CD8-positive, alpha-beta T cell (primary cell): ENCODE measurements at regions of chr3 and their contacts with region 1.

Region 1: DNA sequence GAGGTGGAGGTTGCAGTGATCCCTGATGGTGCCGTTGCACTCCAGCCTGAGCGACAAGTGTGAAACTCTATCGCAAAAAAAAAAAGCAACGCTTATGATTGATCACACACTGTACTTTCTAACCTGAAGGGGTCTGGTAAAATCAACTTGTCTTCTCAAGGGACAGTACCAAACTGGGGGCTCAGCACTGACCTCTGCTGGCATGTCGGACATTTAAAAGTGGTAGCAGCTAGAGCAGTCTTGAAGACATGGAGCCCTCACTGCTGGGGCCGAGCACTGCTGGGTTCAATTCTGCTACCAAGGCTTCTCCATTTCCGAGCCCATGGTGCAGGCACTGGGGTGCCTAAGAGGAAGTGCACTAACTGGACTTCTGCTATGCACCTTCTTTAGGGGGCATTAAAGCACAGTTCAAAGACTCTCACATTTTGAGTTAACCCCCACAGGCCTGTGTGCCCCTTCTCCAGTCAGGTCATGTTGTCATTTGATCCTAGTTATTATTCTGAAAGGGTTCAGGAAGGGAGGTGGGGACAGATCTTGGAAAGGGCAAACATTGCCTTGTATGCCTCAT is 26.4 kb upstream of the LAMP3 start:
- DNase-seq: peak in 4 of 9 experiments; percentile 24 to 50 (median 38)
- ATAC-seq: no peak
- H3K4me3 ChIP-seq: no peak overlapping the region
- H3K4me3 Mint-ChIP-seq: no peak overlapping the region
- H3K27ac ChIP-seq: no peak overlapping the region
- H3K27ac Mint-ChIP-seq: no peak overlapping the region
- H3K4me1 ChIP-seq: no peaks in the 10 kb centered on the region
- H3K4me1 Mint-ChIP-seq: no peaks in the 10 kb centered on the region
- H3K27me3 ChIP-seq: no peaks in the 10 kb centered on the region
- H3K27me3 Mint-ChIP-seq: no peaks in the 10 kb centered on the region
- CTCF ChIP-seq: no peak

Region 2: DNA sequence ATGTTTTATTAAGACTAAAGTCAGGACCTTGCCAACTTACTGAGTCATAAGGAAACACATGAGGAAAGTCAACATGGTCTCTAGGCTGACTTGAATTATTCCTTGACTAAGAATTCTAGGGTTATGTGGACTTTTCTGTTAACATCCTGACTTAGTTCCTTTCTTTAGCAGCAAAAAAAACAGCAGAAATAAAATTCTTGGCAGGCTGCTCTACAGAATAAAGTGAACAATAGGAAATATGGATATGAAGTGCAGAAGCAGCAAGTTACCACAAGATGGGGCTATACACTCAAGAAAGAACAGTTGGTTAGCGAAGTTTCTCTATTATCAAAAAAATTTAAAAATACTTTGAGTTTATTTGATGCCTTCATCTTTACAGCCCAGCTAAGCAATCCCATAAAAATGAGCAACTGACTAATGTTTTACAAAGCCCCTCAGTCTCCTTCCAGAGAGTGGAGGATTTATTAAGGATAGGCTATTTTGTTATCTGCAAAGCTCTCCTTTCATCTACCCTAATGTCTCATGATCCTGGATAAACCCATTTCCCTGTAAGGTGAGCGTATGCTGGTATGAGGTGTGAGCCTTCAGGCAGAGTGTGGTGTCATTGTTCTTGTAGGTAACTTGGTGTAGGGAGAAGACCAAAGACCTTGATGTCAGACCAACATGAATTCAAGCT is 66.6 kb before region 1 on chr3:
- CTCF ChIA-PET with region 1: interaction called, 30 read pairs
- POLR2A ChIA-PET with region 1: no interaction called
- intact Hi-C with region 1: loop called in 1 of 2 experiments (anchors 2 kb)
- DNase-seq: peak in 2 of 9 experiments; percentile 58 to 69
- ATAC-seq: peak; percentile 65
- H3K4me3 ChIP-seq: no peak overlapping the region
- H3K4me3 Mint-ChIP-seq: no peak overlapping the region
- H3K27ac ChIP-seq: no peak overlapping the region
- H3K27ac Mint-ChIP-seq: no peak overlapping the region
- H3K4me1 ChIP-seq: no peaks in the 10 kb centered on the region
- H3K4me1 Mint-ChIP-seq: no peaks in the 10 kb centered on the region
- H3K27me3 ChIP-seq: no peaks in the 10 kb centered on the region
- H3K27me3 Mint-ChIP-seq: peaks cover 6% of the 10 kb centered on the region
- CTCF ChIP-seq: peak; percentile 93

Region 3: GRCh38 chr3:183591881-183592521 is 403.0 kb after region 1 on chr3:
- CTCF ChIA-PET with region 1: no interaction called
- POLR2A ChIA-PET with region 1: no interaction called
- intact Hi-C with region 1: loop called in 1 of 2 experiments (anchors 10 kb)
- DNase-seq: peak in 3 of 9 experiments; percentile 7 to 56 (median 38)
- ATAC-seq: no peak
- H3K4me3 ChIP-seq: no peak overlapping the region
- H3K4me3 Mint-ChIP-seq: peak overlapping the region; percentile 71
- H3K27ac ChIP-seq: no peak overlapping the region
- H3K27ac Mint-ChIP-seq: no peak overlapping the region
- H3K4me1 ChIP-seq: peaks cover 21% of the 10 kb centered on the region
- H3K4me1 Mint-ChIP-seq: peaks cover 24% of the 10 kb centered on the region
- H3K27me3 ChIP-seq: no peaks in the 10 kb centered on the region
- H3K27me3 Mint-ChIP-seq: no peaks in the 10 kb centered on the region
- CTCF ChIP-seq: no peak

Region 4: GRCh38 chr3:184380191-184380626 is 1191.2 kb after region 1 on chr3:
- CTCF ChIA-PET with region 1: no interaction called
- POLR2A ChIA-PET with region 1: no interaction called
- intact Hi-C with region 1: no loop called
- DNase-seq: peak in 3 of 9 experiments; percentile 23 to 45 (median 39)
- ATAC-seq: peak; percentile 34
- H3K4me3 ChIP-seq: peak overlapping the region in 1 of 2 experiments; percentile 47
- H3K4me3 Mint-ChIP-seq: no peak overlapping the region
- H3K27ac ChIP-seq: no peak overlapping the region
- H3K27ac Mint-ChIP-seq: no peak overlapping the region
- H3K4me1 ChIP-seq: peaks cover 8% of the 10 kb centered on the region
- H3K4me1 Mint-ChIP-seq: peaks cover 10% of the 10 kb centered on the region
- H3K27me3 ChIP-seq: peaks cover 25 to 28% of the 10 kb centered on the region in 2 experiments
- H3K27me3 Mint-ChIP-seq: peaks cover 54% of the 10 kb centered on the region
- CTCF ChIP-seq: no peak

Region 5: DNA sequence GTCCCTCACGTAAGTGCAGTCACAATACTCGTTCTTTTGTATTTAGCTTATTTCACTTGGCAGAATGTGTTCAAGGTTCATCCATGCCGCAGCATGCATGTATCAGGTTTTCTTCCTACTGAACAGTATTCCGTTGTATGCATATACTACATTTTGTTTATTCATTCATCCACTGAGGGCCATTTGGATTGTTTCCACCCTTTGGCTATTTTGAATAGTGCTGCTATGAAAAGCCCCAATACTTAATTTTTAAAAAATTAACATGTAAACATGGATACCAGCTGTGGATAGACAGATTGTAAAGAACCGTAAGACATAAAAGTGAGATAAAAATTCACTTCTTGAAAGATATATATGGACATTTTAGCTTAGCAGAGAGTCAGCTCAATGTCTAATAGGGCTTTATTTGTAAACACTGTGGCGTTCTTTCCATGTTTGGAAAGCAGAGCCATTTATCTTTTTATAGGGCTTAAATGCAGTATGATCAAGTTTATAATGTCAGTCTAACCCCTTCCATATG is 1738.9 kb after region 1 on chr3:
- CTCF ChIA-PET with region 1: no interaction called
- POLR2A ChIA-PET with region 1: no interaction called
- intact Hi-C with region 1: no loop called
- DNase-seq: no peak
- ATAC-seq: no peak
- H3K4me3 ChIP-seq: no peak overlapping the region
- H3K4me3 Mint-ChIP-seq: no peak overlapping the region
- H3K27ac ChIP-seq: no peak overlapping the region
- H3K27ac Mint-ChIP-seq: no peak overlapping the region
- H3K4me1 ChIP-seq: no peaks in the 10 kb centered on the region
- H3K4me1 Mint-ChIP-seq: no peaks in the 10 kb centered on the region
- H3K27me3 ChIP-seq: no peaks in the 10 kb centered on the region
- H3K27me3 Mint-ChIP-seq: no peaks in the 10 kb centered on the region
- CTCF ChIP-seq: no peak